Ascending aorta (tissue), 2 donors: ENCODE measurements at regions of chr6 and their contacts with region 1.

Region 1: GRCh38 chr6:115577270-115577669 is 483.4 kb downstream of the FRK start:
- DNase-seq: no peak
- H3K4me3 ChIP-seq: no peak overlapping the region
- H3K27ac ChIP-seq: no peak overlapping the region
- H3K4me1 ChIP-seq: no peaks in the 10 kb centered on the region
- H3K27me3 ChIP-seq: no peaks in the 10 kb centered on the region
- CTCF ChIP-seq: no peak

Region 2: GRCh38 chr6:115356371-115356770 is 220.9 kb before region 1 on chr6:
- intact Hi-C with region 1: no loop called
- DNase-seq: no peak
- H3K4me3 ChIP-seq: no peak overlapping the region
- H3K27ac ChIP-seq: no peak overlapping the region
- H3K4me1 ChIP-seq: no peaks in the 10 kb centered on the region
- H3K27me3 ChIP-seq: no peaks in the 10 kb centered on the region
- CTCF ChIP-seq: no peak

Region 3: DNA sequence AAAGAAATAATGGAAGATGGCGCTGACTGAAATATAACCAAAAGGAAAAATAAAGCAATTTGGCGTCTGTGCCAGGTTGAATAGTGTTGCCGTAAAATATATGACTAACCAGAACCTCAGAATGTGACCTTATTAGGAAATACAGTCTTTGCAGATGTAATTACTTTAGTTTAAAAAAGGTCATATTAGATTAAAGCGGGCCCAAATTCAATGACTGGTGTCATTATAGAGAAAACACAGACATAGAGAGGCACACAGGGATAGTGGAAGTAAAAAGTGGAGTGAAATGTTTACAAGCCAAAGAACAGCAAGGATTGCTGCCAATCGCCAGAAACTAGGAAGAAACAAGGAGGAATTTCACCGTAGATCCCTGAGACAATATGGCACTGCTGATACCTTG is 37.7 kb before region 1 on chr6:
- intact Hi-C with region 1: loop called (anchors 2 kb)
- DNase-seq: no peak
- H3K4me3 ChIP-seq: no peak overlapping the region
- H3K27ac ChIP-seq: no peak overlapping the region
- H3K4me1 ChIP-seq: no peaks in the 10 kb centered on the region
- H3K27me3 ChIP-seq: no peaks in the 10 kb centered on the region
- CTCF ChIP-seq: no peak